ENCODE measurements at regions of chr7 and their contacts with region 1.

Region 1: DNA sequence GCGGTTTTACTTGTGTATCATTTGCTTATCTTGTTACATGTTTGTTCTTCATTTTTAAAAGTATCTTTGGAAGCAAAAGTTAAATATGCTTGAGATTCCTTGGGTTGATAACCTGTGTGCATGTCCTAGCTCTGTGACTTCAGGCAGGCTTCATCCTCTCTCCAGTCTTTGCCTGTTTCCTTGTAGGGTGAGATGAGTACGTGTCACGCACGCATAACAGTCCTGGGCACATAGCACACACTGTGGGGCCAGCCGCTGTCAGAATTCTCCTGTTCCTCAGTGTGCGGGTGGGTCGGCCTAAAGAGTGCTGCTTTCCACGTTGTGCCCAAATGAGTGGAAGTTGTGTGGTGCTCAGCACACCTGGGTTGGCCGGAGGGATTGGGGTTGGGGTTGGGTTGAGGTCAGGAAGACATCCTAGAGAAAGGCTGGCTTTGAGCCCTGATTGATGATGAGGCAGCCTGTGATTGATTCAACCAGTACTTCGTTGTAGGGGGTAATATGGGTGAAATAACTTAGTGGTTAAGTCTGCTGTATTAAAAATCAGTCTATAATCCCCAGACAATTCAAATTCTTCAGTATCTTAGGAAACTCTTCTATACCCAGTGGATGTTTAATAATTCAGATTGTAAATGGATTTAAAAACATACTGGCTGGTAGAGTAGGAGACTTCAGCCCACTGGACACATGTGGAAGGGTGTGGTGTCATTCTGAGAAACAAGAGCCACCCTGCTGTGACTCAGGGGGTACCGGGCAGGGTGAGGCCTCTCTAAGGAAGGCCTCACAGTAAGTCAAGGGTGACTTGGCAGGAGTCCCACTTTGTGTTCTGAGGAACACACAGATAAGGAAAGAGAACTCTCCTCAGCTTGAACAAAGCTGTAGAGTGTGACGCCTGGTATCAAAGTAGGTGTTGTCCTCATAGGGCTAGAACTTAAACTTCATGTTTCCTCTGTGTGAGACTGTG is 54.8 kb downstream of the DAGLB start:
- DNase-seq: peak; percentile 56
- ATAC-seq: peak; percentile 95
- H3K4me3 ChIP-seq: no peak overlapping the region
- H3K27ac ChIP-seq: peak overlapping the region; percentile 35
- H3K4me1 ChIP-seq: peaks cover 19% of the 10 kb centered on the region
- H3K27me3 ChIP-seq: no peaks in the 10 kb centered on the region
- CTCF ChIP-seq: no peak
- EP300 ChIP-seq: no peak
- POLR2A ChIP-seq: no peak
- RAD21 ChIP-seq: no peak

Region 2: GRCh38 chr7:6375348-6376101 is 17.5 kb before region 1 on chr7:
- CTCF ChIA-PET with region 1: interaction called, 5 read pairs
- POLR2A ChIA-PET with region 1: interaction called, 4 read pairs
- RAD21 ChIA-PET with region 1: no interaction called
- SMC1A ChIA-PET with region 1: interaction called, 3 read pairs
- in situ Hi-C with region 1: no loop called
- intact Hi-C with region 1: loop called (anchors 2 kb)
- DNase-seq: no peak
- ATAC-seq: peak; percentile 3
- H3K4me3 ChIP-seq: peak overlapping the region; percentile 83
- H3K27ac ChIP-seq: peak overlapping the region; percentile 78
- H3K4me1 ChIP-seq: peaks cover 10% of the 10 kb centered on the region
- H3K27me3 ChIP-seq: no peaks in the 10 kb centered on the region
- CTCF ChIP-seq: no peak
- EP300 ChIP-seq: no peak
- POLR2A ChIP-seq: no peak
- RAD21 ChIP-seq: no peak

Region 3: DNA sequence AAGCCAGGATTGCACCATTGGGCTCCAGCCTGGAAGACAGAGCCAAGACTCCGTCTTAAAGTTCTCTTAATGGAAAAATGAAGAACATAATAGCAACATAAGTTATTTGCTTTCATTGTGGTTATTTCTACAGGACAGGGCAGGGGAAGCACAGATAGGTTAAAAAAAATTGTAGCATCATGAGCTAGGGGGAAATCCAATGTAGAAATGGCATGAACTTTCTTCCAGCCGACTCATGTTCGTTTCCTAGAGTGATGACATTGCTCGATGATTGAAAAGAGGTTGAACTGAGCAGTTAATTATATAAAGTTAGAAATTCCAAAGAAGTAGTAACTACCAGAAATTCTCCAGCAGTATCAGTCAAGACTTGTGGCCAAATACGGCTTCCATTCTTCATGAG is 10.2 kb before region 1 on chr7:
- CTCF ChIA-PET with region 1: interaction called, 5 read pairs
- POLR2A ChIA-PET with region 1: interaction called, 5 read pairs
- RAD21 ChIA-PET with region 1: no interaction called
- SMC1A ChIA-PET with region 1: interaction called, 13 read pairs
- in situ Hi-C with region 1: no loop called
- intact Hi-C with region 1: no loop called
- DNase-seq: no peak
- ATAC-seq: peak; percentile 43
- H3K4me3 ChIP-seq: peak overlapping the region; percentile 42; the same call in 1 of the 2 replicates
- H3K27ac ChIP-seq: no peak overlapping the region
- H3K4me1 ChIP-seq: peaks cover 28% of the 10 kb centered on the region
- H3K27me3 ChIP-seq: no peaks in the 10 kb centered on the region
- CTCF ChIP-seq: no peak
- EP300 ChIP-seq: no peak
- POLR2A ChIP-seq: no peak
- RAD21 ChIP-seq: no peak